Activated naive CD4-positive, alpha-beta T cell treated with anti-CD3 and anti-CD28 coated beads for 36 hours (primary cell): ENCODE measurements at regions of chr3 and their contacts with region 1.

Region 1: DNA sequence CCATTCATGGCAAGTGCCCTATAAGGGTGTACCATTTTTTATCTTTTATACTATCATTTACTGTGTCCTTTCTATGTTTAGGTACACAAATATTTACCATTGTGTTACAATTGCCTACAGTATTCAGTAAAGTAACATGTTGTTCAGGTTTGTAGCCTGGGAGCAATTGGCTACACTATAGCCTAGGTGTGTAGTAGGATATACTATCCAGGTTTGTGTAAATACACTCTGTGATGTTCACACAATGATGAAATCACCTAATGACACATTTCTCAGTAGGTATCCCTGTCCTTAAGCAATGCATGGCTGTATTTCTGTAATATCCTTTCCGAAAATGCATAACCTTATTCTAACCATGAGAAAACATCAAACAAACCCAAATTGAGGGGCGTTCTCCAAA is 17.9 kb upstream of the CNOT10 start:
- DNase-seq: no peak
- H3K4me3 Mint-ChIP-seq: no peak overlapping the region
- H3K27ac Mint-ChIP-seq: no peak overlapping the region
- H3K4me1 Mint-ChIP-seq: no peaks in the 10 kb centered on the region
- H3K27me3 Mint-ChIP-seq: no peaks in the 10 kb centered on the region

Region 2: DNA sequence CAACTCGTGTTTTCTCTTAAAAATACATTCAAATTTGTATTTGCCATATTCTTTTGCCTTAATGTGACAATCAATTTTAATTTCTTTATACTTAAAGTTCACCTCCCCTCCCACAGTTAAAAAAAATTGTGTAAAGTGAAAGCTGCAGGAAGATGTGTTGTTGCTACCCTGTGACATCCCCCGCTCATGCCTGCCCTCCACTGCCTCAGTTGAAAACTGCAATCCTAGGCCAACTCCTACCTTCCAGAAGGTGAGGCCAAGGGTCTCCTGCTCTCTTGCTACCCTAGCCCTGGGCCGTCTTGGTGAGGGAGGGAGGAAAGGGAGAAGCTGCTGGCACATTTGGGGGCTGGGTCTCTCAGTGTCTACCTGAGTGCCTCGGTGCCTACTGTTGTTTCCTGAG is 332.4 kb before region 1 on chr3:
- CTCF ChIA-PET with region 1: no interaction called
- intact Hi-C with region 1: loop called (anchors 2 kb)
- DNase-seq: peak; percentile 83
- H3K4me3 Mint-ChIP-seq: no peak overlapping the region
- H3K27ac Mint-ChIP-seq: peak overlapping the region; percentile 19
- H3K4me1 Mint-ChIP-seq: peaks cover 44% of the 10 kb centered on the region
- H3K27me3 Mint-ChIP-seq: no peaks in the 10 kb centered on the region

Region 3: DNA sequence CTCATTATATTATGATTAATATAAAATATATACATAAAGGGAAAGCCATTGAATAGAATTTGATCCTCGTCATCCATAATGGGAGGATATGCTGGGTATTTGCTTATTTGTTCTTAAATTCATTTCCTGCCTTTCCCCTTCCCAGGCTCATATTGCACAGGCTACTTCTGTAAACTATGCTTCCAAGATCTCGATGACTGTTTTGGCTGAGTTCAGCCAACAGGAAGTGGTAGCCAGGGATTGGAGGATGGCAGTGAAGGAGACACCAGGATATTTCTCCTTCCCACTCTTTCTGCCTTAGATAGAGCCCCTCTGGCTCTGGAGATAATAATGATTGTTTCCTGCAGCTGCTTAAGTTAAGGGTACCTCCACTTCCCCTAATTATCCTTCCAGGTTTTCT is 52.2 kb before region 1 on chr3:
- CTCF ChIA-PET with region 1: no interaction called
- intact Hi-C with region 1: no loop called
- DNase-seq: no peak
- H3K4me3 Mint-ChIP-seq: no peak overlapping the region
- H3K27ac Mint-ChIP-seq: no peak overlapping the region
- H3K4me1 Mint-ChIP-seq: no peaks in the 10 kb centered on the region
- H3K27me3 Mint-ChIP-seq: peaks cover 2% of the 10 kb centered on the region